ENCODE measurements at regions of chr10 and their contacts with region 1.

Region 1: GRCh38 chr10:44386546-44387052 is 1.7 kb upstream of the CXCL12 start:
- DNase-seq: peak; percentile 77
- ATAC-seq: peak; percentile 89
- H3K4me3 ChIP-seq: no peak overlapping the region
- H3K27ac ChIP-seq: no peak overlapping the region
- H3K4me1 ChIP-seq: peaks cover 12% of the 10 kb centered on the region
- H3K27me3 ChIP-seq: peaks cover 32% of the 10 kb centered on the region
- CTCF ChIP-seq: peak; percentile 90

Region 2: DNA sequence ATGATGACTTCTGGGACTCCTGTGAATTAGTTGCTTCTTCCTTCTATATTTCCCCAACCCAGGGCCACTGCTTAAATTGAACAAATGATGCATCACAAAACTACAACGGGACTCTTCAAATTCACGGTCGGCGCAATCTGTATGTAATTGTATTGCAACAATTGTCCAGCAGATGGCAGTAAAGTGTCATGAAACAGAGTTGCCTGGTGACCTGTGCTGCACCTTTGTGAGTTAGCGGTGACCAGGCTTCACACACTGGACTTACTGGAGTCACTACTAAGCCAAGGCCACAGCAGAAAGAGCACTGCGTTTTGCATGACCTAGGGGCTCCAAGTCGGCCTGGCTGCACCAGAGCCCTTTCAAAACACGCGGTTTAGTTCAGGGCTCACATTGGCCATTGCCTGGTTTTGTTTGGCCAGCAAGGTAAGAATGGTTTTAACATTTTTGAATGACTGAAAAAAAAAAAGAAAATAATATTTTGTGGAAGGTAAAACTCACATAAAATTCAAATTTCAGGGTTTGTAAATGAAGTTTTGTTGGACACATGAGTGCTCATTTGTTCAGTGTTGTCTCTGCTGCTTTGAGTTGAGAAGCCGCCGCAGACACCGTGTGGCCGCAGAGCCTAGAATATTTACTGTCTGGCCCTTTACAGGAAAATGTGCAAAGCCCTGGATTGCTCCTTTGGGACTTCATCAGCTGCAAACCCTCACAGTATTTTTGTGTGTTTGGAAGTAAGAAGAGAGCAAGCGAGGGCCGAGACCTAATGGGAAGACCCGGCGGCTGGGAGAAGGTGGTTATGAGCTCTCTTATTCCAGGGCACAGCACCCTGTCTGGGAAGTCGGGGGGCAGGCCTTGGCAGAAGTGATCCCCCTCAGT is 714.7 kb before region 1 on chr10:
- intact Hi-C with region 1: loop called (anchors 5 kb)
- DNase-seq: peak; percentile 59
- ATAC-seq: peak; percentile 86
- H3K4me3 ChIP-seq: no peak overlapping the region
- H3K27ac ChIP-seq: no peak overlapping the region
- H3K4me1 ChIP-seq: no peaks in the 10 kb centered on the region
- H3K27me3 ChIP-seq: peaks cover 17% of the 10 kb centered on the region
- CTCF ChIP-seq: peak; percentile 77

Region 3: DNA sequence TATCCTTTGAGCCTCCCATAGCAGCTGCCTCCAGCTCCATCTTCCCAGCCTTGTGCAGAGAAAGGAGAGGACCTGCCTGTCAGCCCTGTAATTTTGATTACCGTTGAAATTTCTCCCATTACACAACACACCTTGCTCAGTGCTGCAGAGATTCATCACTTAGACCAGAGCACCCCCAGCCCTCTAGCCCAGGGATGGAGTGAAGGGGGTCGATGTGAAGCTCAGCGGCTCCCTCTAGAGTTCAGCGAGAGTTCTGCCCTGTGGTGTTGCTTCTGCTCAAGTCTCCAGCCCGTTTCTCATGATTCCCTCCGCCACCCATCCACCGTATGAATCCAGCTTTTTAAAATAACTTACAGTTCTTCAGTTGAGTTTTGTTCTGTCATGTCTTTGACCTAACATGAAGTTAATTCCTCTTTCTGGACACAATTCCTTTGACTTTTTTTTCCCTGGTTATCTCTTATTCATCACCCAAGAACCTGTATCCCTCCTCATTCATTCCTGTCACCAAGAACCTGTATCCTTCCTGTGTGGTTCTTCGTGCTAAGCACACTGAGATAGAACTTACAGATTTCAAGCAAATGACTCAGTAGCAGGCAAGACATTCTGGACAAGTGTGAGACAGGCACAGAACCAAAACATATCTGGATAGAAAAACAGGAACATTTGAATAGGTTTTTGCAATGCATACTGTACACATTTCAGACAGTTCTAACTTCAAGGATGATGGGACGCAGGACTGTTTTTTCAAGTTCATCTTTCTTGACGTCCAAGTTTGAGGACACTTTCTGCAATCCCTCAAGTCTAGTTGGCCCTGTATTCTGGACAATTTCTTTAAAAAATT is 702.9 kb before region 1 on chr10:
- intact Hi-C with region 1: loop called (anchors 5 kb)
- DNase-seq: no peak
- ATAC-seq: peak; percentile 73
- H3K4me3 ChIP-seq: no peak overlapping the region
- H3K27ac ChIP-seq: no peak overlapping the region
- H3K4me1 ChIP-seq: no peaks in the 10 kb centered on the region
- H3K27me3 ChIP-seq: no peaks in the 10 kb centered on the region
- CTCF ChIP-seq: peak; percentile 47

Measured in upper lobe of right lung (tissue), 1 donor.